Cardiac septum (tissue), 1 donor: ENCODE measurements at regions of chr11 and their contacts with region 1.

Region 1: DNA sequence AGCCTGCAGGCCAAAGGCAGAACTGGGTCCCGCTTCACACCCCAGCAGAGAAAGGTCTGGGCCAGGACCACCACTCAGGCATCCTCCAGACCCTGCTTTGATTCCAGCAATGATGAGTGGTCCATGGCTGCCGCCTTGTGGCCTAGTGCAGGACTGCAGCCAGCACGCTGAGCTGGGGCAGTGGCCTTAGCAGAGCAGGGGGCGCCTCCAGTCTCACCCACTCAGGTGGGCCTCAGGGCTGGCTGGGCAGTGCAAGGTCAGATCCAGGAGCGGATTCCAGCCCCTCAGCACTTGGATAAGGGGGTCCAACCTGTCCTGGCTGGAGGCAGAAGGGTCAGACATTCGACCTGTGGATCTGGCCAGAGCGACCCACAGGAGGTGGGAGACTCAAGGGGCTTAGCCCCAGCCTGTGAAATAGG is 9.6 kb upstream of the PDE2A start:
- DNase-seq: no peak

Region 2: DNA sequence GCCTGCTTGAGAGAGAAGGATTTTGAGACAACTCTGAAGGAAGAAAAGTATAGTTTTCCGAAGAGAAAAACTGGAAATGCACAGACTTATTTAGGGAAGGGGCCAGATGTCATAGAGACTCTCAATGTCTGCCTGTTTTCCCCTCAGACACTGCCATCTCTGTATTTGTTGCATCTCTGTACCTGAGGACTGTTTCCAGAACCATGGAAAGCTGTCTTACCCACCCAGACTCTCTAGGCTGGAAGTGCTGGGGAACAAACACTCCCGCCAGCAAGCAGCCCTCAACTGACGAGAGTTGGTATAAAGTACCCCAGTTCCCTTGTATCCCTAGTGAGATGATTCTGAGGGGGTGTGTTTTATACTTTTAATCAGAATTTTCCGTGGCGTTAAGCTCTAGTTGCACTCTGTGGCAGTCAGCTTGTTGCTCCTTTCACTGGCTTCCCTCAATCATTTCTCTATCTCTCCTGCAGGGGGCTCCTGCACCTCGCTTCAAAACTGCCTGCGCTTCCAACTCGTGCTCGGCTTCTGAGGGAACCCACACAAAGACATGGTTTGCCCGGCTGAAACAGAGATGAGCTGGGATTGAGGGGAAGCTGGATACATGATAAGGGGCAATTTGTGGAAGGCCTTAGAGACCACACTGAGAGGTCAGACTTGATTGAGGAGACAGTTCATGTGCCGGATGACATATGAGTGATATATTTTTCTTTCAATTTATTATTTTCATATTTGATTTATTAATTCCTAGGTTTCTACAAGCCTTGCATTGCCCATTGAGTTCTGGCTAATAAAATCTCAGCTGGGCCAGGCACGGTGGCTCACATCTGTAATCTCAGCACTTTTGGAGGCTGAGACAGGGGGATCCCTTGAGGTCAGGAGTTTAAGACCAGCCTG is 212.5 kb before region 1 on chr11:
- intact Hi-C with region 1: loop called (anchors 5 kb)
- DNase-seq: no peak

Region 3: GRCh38 chr11:72585762-72586311 is 98.0 kb before region 1 on chr11:
- intact Hi-C with region 1: loop called (anchors 2 kb)
- DNase-seq: no peak

Region 4: GRCh38 chr11:72875736-72876135 is 191.9 kb after region 1 on chr11:
- intact Hi-C with region 1: no loop called
- DNase-seq: no peak